CD4-positive, alpha-beta T cell (primary cell): ENCODE measurements at regions of chr3 and their contacts with region 1.

Region 1: GRCh38 chr3:15427182-15427880 is at the starts of genes EAF1 and METTL6:
- DNase-seq: peak; percentile 71 to 91 (median 80)
- ATAC-seq: peak; percentile 84
- H3K4me3 ChIP-seq: peak within 1 kb of the TSS; percentile 72
- H3K4me3 Mint-ChIP-seq: peak within 1 kb of the TSS; percentile 93
- H3K27ac ChIP-seq: peak within 1 kb of the TSS; percentile 58 to 80
- H3K27ac Mint-ChIP-seq: peak within 1 kb of the TSS; percentile 81
- H3K4me1 ChIP-seq: peaks cover 33% of the 10 kb centered on the region
- H3K4me1 Mint-ChIP-seq: peaks cover 74% of the 10 kb centered on the region
- H3K27me3 ChIP-seq: no peaks in the 10 kb centered on the region
- H3K27me3 Mint-ChIP-seq: no peaks in the 10 kb centered on the region
- CTCF ChIP-seq: peak; percentile 19
- total RNA-seq, gene EAF1: 31.7 to 34.9 TPM
- total RNA-seq, gene METTL6: 4.7 to 5.7 TPM

Region 2: DNA sequence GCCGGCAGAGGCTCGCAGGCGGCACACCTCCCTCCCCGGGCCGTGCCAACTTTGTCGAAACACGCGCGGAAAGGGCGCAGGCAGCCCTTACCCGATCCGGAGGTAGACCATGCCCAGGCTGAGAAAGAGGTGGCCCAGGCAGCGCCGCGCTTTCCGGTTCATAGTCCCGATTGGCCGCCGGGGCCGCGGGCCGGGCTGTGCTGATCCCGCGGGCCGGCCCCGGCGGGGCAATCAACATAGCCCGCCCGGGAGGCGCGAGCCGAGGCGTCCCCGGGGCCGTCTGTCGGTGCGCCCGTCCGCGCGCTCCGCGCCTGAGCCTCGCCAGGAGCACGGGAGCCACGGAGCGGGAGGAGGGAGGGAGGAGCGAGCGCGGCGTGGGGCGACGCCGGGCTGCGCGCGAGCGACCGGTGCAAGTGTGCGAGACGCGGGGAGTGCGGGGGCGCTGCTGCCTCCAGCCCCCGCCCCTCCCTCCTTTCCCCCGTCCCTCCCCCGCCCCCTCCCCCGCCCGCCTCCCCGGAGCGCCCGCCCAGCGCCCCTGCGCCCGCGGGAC is 1547.6 kb before region 1 on chr3 and contains the start of gene WNT7A:
- CTCF ChIA-PET with region 1: no interaction called
- POLR2A ChIA-PET with region 1: no interaction called
- intact Hi-C with region 1: loop called in 1 of 2 experiments (anchors 10 kb)
- DNase-seq: peak in 8 of 14 experiments; percentile 34 to 88 (median 56)
- ATAC-seq: peak; percentile 63
- H3K4me3 ChIP-seq: peak within 1 kb of the TSS; percentile 92
- H3K4me3 Mint-ChIP-seq: peak within 1 kb of the TSS; percentile 93
- H3K27ac ChIP-seq: peak within 1 kb of the TSS; percentile 17 to 33
- H3K27ac Mint-ChIP-seq: peak within 1 kb of the TSS; percentile 25
- H3K4me1 ChIP-seq: peaks cover 36% of the 10 kb centered on the region
- H3K4me1 Mint-ChIP-seq: peaks cover 26% of the 10 kb centered on the region
- H3K27me3 ChIP-seq: peaks cover 4 to 20% of the 10 kb centered on the region in 2 experiments
- H3K27me3 Mint-ChIP-seq: peaks cover 10% of the 10 kb centered on the region
- CTCF ChIP-seq: no peak
- total RNA-seq, gene WNT7A: 22.4 to 24.7 TPM

Region 3: DNA sequence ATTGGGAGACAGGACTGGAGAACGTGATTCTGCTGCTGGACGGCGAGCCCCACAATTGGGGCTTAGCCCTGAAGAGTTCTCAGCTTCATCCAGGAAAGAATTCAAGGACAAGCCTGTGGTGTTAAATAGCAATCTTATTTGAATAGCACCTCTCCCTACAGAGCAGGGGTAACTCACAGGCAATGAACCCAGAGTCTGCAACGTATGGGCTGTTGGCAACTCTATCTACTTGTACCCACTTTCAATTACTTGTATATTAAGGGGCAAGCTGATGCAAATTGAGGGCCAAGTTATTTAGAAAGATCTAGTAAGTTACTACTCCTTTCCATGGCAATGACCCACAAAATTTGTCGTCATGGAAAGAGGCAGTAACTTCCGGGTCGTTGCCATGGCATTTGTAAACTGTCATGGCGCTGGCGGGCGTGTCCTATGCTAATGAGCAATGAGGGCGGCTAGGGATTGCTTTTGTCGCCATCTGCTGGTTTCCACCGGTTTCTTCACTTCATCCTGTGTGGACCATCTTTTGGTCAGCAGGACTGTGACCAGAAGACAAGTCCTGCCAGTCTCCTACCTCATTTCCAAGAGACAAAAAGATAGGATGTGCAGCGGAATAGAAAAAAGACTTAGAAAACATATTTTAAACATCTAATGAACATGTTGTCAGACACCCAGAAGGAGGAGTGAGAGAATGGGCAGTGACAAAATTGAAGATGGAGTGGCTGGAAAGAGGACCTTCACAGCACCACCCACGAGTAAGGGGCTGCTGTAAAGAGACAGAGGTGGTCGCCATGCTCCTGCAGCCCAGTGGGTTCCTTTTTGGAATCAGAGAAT is 49.2 kb before region 1 on chr3:
- CTCF ChIA-PET with region 1: no interaction called
- POLR2A ChIA-PET with region 1: no interaction called
- intact Hi-C with region 1: loop called in 1 of 2 experiments (anchors 2 kb)
- DNase-seq: peak; percentile 87 to 98 (median 92)
- ATAC-seq: peak; percentile 95
- H3K4me3 ChIP-seq: no peak overlapping the region
- H3K4me3 Mint-ChIP-seq: peak overlapping the region; percentile 2
- H3K27ac ChIP-seq: peak overlapping the region; percentile 79 to 94
- H3K27ac Mint-ChIP-seq: peak overlapping the region; percentile 91
- H3K4me1 ChIP-seq: peaks cover 8% of the 10 kb centered on the region
- H3K4me1 Mint-ChIP-seq: peaks cover 10% of the 10 kb centered on the region
- H3K27me3 ChIP-seq: no peaks in the 10 kb centered on the region
- H3K27me3 Mint-ChIP-seq: no peaks in the 10 kb centered on the region
- CTCF ChIP-seq: peak; percentile 82

Region 4: DNA sequence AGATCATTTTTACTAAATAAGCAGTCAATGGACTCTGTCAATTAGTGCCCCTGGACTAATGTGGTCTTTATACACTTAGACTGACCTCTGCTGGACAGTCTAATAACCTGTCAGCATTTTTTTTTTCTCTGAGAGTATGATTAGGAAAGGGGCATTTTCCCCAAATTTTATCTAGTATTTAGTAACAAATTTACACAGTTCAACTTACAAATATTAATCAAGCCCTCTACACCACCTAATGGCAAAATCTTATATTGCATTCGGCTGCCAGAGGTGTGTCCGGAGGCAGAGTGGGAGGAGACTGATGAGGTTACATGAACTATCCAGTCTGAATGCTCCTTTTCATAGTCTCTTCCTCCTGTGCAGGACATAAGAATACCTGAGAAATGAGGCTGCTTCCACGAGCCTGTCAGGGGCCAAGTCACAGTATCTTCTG is 130.2 kb after region 1 on chr3:
- CTCF ChIA-PET with region 1: no interaction called
- POLR2A ChIA-PET with region 1: no interaction called
- intact Hi-C with region 1: loop called (anchors 5 to 10 kb)
- DNase-seq: peak; percentile 17 to 90 (median 38)
- ATAC-seq: peak; percentile 99
- H3K4me3 ChIP-seq: no peak overlapping the region
- H3K4me3 Mint-ChIP-seq: no peak overlapping the region
- H3K27ac ChIP-seq: no peak overlapping the region
- H3K27ac Mint-ChIP-seq: no peak overlapping the region
- H3K4me1 ChIP-seq: peaks cover 10% of the 10 kb centered on the region
- H3K4me1 Mint-ChIP-seq: peaks cover 13% of the 10 kb centered on the region
- H3K27me3 ChIP-seq: no peaks in the 10 kb centered on the region
- H3K27me3 Mint-ChIP-seq: no peaks in the 10 kb centered on the region
- CTCF ChIP-seq: peak; percentile 77